ENCODE measurements at regions of chr19 and their contacts with region 1.

Region 1: DNA sequence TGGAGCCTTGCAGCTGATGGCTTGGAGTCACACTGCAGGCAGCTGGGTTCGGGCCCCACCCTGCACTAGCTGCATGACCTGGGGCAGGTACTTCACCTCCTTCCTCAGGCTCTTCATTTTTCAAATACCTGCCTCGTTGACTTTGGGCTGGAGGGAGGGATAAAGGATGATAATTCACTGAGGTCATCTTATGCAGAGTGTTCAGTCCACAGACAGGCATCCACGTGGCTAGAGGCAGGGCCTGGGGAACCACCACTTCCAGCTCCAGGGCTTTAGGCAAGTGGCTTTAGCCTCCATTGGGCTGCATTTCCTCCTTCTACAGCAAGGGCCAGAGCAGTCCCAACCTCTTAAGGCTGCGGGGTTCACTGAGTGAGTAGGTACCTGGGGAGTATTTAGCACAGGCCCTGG is 84.8 kb downstream of the SIPA1L3 start:
- DNase-seq: no peak
- H3K4me3 Mint-ChIP-seq: no peak overlapping the region
- H3K27ac Mint-ChIP-seq: no peak overlapping the region
- H3K4me1 Mint-ChIP-seq: peaks cover 19% of the 10 kb centered on the region
- H3K27me3 Mint-ChIP-seq: no peaks in the 10 kb centered on the region
- CTCF ChIP-seq: no peak

Region 2: DNA sequence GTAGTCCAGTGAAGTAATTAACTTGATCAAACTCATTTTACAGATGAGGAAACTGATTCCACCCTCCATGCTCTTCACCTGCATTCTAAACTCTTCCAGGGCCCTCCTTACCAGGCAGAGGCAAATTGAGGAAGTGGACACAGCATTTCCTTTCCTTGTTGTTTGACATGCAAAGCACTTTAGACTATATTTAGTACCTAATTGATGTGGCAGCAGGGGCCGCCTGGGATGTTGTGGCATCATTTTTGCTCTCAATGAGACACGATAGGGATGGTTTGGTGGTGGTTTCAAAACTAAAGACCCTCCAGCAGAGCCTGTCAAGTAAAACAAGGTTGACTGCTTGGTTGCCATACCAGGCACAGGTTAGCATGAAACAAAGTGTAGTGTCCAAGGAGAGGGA is 76.9 kb before region 1 on chr19:
- CTCF ChIA-PET with region 1: no interaction called
- POLR2A ChIA-PET with region 1: no interaction called
- intact Hi-C with region 1: no loop called
- DNase-seq: no peak
- H3K4me3 Mint-ChIP-seq: no peak overlapping the region
- H3K27ac Mint-ChIP-seq: no peak overlapping the region
- H3K4me1 Mint-ChIP-seq: no peaks in the 10 kb centered on the region
- H3K27me3 Mint-ChIP-seq: no peaks in the 10 kb centered on the region
- CTCF ChIP-seq: no peak

Region 3: GRCh38 chr19:38004521-38005223 is 12.8 kb after region 1 on chr19:
- CTCF ChIA-PET with region 1: interaction called, 6 read pairs
- POLR2A ChIA-PET with region 1: interaction called, 15 read pairs
- intact Hi-C with region 1: no loop called
- DNase-seq: peak; percentile 99
- H3K4me3 Mint-ChIP-seq: no peak overlapping the region
- H3K27ac Mint-ChIP-seq: no peak overlapping the region
- H3K4me1 Mint-ChIP-seq: peaks cover 5% of the 10 kb centered on the region
- H3K27me3 Mint-ChIP-seq: no peaks in the 10 kb centered on the region
- CTCF ChIP-seq: no peak

Region 4: DNA sequence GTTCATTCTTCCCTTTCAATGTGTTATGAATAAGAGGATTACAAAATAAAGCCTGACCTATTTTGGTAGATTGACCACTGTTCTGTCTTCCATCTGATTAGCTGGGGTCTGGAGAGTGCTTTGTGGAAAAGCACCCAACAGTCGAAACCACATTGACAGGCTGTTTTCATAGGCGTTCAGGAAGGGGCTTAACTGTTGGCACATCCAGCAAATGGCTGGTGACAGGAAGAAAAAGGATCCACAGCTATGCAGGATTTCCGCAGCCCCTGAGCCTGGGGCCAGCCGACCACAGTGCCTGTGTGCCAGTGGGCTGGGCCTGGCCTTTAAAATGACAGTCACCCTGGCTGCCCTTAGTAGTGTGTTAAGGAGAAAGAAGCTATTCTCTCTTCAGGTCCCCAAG is 28.5 kb after region 1 on chr19:
- CTCF ChIA-PET with region 1: no interaction called
- POLR2A ChIA-PET with region 1: no interaction called
- intact Hi-C with region 1: no loop called
- DNase-seq: no peak
- H3K4me3 Mint-ChIP-seq: no peak overlapping the region
- H3K27ac Mint-ChIP-seq: no peak overlapping the region
- H3K4me1 Mint-ChIP-seq: no peaks in the 10 kb centered on the region
- H3K27me3 Mint-ChIP-seq: no peaks in the 10 kb centered on the region
- CTCF ChIP-seq: no peak

Region 5: GRCh38 chr19:38033658-38034498 is 42.0 kb after region 1 on chr19:
- CTCF ChIA-PET with region 1: no interaction called
- POLR2A ChIA-PET with region 1: no interaction called
- intact Hi-C with region 1: no loop called
- DNase-seq: no peak
- H3K4me3 Mint-ChIP-seq: no peak overlapping the region
- H3K27ac Mint-ChIP-seq: no peak overlapping the region
- H3K4me1 Mint-ChIP-seq: no peaks in the 10 kb centered on the region
- H3K27me3 Mint-ChIP-seq: no peaks in the 10 kb centered on the region
- CTCF ChIP-seq: no peak

Measured in MCF 10A (cell line).